Posterior vena cava (tissue), 2 donors: ENCODE measurements at regions of chr3 and their contacts with region 1.

Region 1: DNA sequence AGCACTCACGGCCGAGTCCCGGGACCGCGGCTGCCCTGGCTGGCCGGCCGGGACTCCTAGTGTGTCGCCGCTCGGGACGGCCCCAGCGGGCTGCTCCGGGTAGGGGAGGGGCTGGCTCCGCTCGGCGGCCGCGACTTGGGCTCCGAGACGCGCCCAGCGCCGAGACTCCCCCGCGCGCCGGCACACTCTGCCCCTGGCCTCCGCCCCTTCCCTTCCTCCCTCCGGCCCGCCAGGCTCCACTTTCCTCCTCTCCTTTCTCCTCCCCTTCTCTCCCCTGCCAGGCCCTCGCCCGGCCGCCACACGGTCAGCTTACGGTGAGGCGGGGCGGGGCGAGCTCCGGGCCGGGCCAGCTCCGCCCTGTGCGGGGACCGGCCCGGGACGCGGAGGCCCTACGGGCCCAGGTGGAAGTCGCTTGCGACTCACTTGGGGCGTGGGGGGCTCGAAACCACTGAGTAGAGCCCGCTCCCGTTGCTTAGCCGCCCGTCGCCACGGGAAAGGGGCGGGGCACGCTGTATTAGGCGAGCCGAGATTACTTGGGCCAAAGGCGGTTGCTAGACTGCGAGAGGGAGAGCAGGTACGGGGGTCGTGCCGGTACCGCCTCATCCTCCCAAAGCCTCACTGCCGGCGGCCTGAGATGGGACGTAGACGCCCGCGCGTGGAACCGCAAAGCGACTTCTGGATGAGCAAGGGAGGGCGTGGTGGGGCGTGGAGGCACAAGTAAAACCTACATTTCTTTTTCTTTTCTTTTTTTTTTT is at the start of gene ITGB5:
- DNase-seq: peak; percentile 95
- total RNA-seq, gene ITGB5: 250 to 292 TPM

Region 2: GRCh38 chr3:124780761-124781475 is 106.4 kb before region 1 on chr3:
- intact Hi-C with region 1: loop called in 1 of 2 experiments (anchors 5 kb)
- DNase-seq: peak; percentile 93

Region 3: GRCh38 chr3:124834723-124835718 is 52.3 kb before region 1 on chr3:
- intact Hi-C with region 1: loop called in 1 of 2 experiments (anchors 5 kb)
- DNase-seq: no peak